Heart right ventricle (tissue), 16 donors: ENCODE measurements at regions of chr7 and their contacts with region 1.

Region 1: DNA sequence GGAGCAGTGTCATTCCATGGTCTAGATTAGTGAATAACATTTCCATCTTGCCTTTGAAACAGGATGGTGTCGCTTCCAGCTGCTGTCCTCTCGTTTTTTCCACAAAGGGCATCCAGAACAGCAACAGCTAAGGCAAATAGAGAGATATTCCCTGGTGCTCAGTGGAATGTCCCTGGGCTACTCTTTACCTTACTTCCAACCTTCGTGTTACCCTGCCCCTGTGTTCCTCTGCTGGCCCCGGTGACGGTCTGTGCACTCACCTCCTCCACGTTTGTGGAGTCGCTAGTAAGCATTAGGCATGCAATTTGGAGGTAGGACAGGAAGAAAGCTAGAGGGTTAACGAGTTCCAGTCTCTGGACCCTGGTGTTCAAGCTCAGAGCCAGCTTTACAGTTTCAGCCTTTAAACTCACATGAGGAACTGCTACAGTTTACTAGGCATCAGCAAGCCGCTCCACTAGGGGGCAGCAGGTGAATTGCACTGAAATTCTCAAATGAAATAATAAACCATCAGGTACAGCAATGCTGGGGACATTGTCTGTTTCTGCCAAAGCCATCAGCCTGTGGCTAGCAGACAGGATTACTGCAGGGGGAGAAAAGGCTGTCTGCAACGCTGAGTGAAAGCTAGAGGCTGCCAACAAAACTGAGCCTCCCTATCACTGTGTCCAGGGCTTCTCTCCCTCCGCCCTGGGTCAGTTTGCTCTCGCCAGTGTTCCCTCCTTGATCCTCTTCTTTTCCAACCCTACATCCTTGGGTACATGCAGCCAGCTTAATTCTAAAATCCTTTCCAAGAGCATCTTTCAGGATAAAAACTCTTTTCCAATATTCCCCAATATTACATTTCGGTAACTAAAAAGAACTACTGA is 9.0 kb downstream of the MRPL32 start:
- DNase-seq: peak; percentile 70 to 75
- ATAC-seq: peak; percentile 23 to 83 (median 66)
- H3K4me3 ChIP-seq: no peak overlapping the region
- H3K27ac ChIP-seq: no peak overlapping the region
- H3K4me1 ChIP-seq: peaks cover 0 to 4% (median 0%) of the 10 kb centered on the region in 9 donors
- H3K27me3 ChIP-seq: no peaks in the 10 kb centered on the region
- CTCF ChIP-seq: peak; percentile 78 to 92 (median 88)

Region 2: GRCh38 chr7:42831006-42831717 is 110.1 kb before region 1 on chr7:
- intact Hi-C with region 1: no loop called
- DNase-seq: no peak
- ATAC-seq: peak in 2 of 8 donors; percentile 16 to 28
- H3K4me3 ChIP-seq: no peak overlapping the region
- H3K27ac ChIP-seq: no peak overlapping the region
- H3K4me1 ChIP-seq: peaks cover 0 to 14% (median 0%) of the 10 kb centered on the region in 9 donors
- H3K27me3 ChIP-seq: no peaks in the 10 kb centered on the region
- CTCF ChIP-seq: no peak

Region 3: GRCh38 chr7:43260980-43261878 is 320.0 kb after region 1 on chr7:
- intact Hi-C with region 1: loop called (anchors 2 to 5 kb)
- DNase-seq: peak; percentile 53 to 61
- ATAC-seq: peak in 6 of 8 donors; percentile 38 to 77 (median 64)
- H3K4me3 ChIP-seq: no peak overlapping the region
- H3K27ac ChIP-seq: no peak overlapping the region
- H3K4me1 ChIP-seq: no peaks in the 10 kb centered on the region
- H3K27me3 ChIP-seq: peaks cover 0 to 13% (median 5%) of the 10 kb centered on the region in 7 donors
- CTCF ChIP-seq: peak; percentile 72 to 91 (median 87)

Region 4: GRCh38 chr7:43454936-43455518 is 513.8 kb after region 1 on chr7:
- intact Hi-C with region 1: loop called in 2 of 10 experiments (anchors 10 kb)
- DNase-seq: no peak
- ATAC-seq: no peak
- H3K4me3 ChIP-seq: no peak overlapping the region
- H3K27ac ChIP-seq: no peak overlapping the region
- H3K4me1 ChIP-seq: peaks cover 0 to 5% (median 0%) of the 10 kb centered on the region in 9 donors
- H3K27me3 ChIP-seq: peaks cover 0 to 3% (median 0%) of the 10 kb centered on the region in 7 donors
- CTCF ChIP-seq: peak in 7 of 9 donors; percentile 6 to 58 (median 48)

Region 5: DNA sequence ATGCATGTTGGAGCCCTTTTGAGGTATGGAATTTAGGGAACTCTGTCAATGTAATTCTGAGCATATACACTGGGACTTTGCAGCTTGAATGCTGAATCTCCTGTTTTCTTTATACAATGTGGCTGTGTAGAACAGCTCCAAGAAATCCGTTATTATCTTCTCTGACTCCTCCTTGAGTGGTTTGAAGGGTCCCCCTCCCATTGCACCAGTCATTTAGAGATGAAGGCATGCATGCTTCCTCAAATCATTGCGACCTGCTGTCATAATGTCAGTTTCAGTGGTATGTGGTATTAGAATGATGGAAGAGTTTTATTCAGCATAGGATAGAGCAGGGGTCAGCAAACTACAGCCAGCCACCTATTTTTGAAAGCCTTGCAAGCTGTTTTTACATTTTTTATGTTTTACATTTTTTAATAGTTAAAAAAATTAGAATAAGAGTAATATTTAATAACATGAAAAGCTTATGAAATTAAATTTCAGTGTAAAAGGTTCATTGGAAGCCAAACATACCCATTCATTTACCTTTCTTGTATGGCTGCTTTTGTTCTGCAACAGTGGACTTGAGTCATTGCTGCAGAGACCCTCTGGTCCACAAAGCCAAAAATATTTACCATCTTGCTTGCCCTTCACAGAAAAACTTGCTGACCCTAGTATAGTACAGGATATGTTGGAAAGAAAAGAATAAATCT is 649.8 kb after region 1 on chr7:
- intact Hi-C with region 1: no loop called
- DNase-seq: no peak
- ATAC-seq: no peak
- H3K4me3 ChIP-seq: no peak overlapping the region
- H3K27ac ChIP-seq: peak overlapping the region in 1 of 10 donors; percentile 1
- H3K4me1 ChIP-seq: peaks cover 0 to 65% (median 2%) of the 10 kb centered on the region in 9 donors
- H3K27me3 ChIP-seq: no peaks in the 10 kb centered on the region
- CTCF ChIP-seq: no peak

Region 6: GRCh38 chr7:43721193-43721806 is 780.1 kb after region 1 on chr7:
- intact Hi-C with region 1: loop called in 3 of 10 experiments (anchors 5 to 10 kb)
- DNase-seq: peak in 1 of 2 donors; percentile 16
- ATAC-seq: no peak
- H3K4me3 ChIP-seq: no peak overlapping the region
- H3K27ac ChIP-seq: no peak overlapping the region
- H3K4me1 ChIP-seq: peaks cover 0 to 26% (median 7%) of the 10 kb centered on the region in 9 donors
- H3K27me3 ChIP-seq: no peaks in the 10 kb centered on the region
- CTCF ChIP-seq: peak; percentile 48 to 82 (median 75)